ENCODE measurements at regions of chr16 and their contacts with region 1.

Region 1: GRCh38 chr16:30122604-30123160 is 338 bp downstream of the MAPK3 start:
- DNase-seq: peak in 7 of 9 experiments; percentile 14 to 58 (median 34)
- ATAC-seq: peak; percentile 29
- H3K4me3 ChIP-seq: peak overlapping the region; percentile 83 to 85
- H3K4me3 Mint-ChIP-seq: peak overlapping the region; percentile 85
- H3K27ac ChIP-seq: peak overlapping the region; percentile 34 to 55
- H3K27ac Mint-ChIP-seq: peak overlapping the region; percentile 87
- H3K4me1 ChIP-seq: peaks cover 24% of the 10 kb centered on the region
- H3K4me1 Mint-ChIP-seq: peaks cover 27% of the 10 kb centered on the region
- H3K27me3 ChIP-seq: no peaks in the 10 kb centered on the region
- H3K27me3 Mint-ChIP-seq: no peaks in the 10 kb centered on the region
- CTCF ChIP-seq: no peak

Region 2: DNA sequence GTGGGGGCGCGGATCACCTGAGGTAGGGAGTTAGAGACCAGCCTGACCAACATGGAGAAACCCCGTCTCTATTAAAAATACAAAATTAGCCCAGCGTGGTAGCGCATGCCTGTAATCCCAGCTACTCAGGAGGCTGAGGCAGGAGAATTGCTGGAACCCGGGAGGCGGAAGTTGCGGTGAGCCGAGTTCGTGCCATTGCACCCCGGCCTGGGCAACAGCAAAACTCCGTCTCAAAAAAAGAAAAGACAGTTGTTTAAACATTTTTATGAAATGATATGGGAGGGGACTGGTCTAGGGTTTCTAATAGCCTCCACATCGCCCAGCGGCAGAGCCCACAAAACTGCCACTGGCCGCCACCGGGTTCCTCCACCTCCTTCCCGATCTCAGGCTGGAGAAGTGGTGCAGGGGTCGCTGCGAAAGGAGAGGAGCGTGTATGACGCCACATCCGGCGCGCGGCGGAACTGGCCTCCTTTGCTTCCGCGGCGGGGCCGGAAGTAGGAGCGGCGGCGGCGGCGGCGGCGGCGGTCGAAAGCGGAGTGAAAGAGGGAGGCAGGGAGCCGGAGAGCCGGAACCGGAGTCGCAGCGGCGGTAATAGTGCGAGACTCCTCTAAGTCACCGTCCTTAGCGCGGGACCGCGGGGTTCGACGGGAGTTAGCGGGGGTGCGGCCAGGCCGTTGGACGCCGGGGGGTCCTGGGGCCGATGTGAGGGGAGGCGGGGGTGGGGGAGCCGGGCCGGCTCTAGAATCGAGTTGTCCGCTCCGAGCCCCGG is 47.0 kb before region 1 on chr16 and contains the start of gene PPP4C:
- CTCF ChIA-PET with region 1: interaction called, 3 read pairs
- POLR2A ChIA-PET with region 1: no interaction called
- intact Hi-C with region 1: loop called in 1 of 2 experiments (anchors 5 kb)
- DNase-seq: peak; percentile 65 to 94 (median 89)
- ATAC-seq: peak; percentile 88
- H3K4me3 ChIP-seq: peak within 1 kb of the TSS; percentile 96 to 99
- H3K4me3 Mint-ChIP-seq: peak within 1 kb of the TSS; percentile 93
- H3K27ac ChIP-seq: peak within 1 kb of the TSS; percentile 82 to 92
- H3K27ac Mint-ChIP-seq: peak within 1 kb of the TSS; percentile 96
- H3K4me1 ChIP-seq: peaks cover 31% of the 10 kb centered on the region
- H3K4me1 Mint-ChIP-seq: peaks cover 38% of the 10 kb centered on the region
- H3K27me3 ChIP-seq: no peaks in the 10 kb centered on the region
- H3K27me3 Mint-ChIP-seq: no peaks in the 10 kb centered on the region
- CTCF ChIP-seq: no peak
- total RNA-seq, gene PPP4C: 89.4 to 97.4 TPM

Region 3: DNA sequence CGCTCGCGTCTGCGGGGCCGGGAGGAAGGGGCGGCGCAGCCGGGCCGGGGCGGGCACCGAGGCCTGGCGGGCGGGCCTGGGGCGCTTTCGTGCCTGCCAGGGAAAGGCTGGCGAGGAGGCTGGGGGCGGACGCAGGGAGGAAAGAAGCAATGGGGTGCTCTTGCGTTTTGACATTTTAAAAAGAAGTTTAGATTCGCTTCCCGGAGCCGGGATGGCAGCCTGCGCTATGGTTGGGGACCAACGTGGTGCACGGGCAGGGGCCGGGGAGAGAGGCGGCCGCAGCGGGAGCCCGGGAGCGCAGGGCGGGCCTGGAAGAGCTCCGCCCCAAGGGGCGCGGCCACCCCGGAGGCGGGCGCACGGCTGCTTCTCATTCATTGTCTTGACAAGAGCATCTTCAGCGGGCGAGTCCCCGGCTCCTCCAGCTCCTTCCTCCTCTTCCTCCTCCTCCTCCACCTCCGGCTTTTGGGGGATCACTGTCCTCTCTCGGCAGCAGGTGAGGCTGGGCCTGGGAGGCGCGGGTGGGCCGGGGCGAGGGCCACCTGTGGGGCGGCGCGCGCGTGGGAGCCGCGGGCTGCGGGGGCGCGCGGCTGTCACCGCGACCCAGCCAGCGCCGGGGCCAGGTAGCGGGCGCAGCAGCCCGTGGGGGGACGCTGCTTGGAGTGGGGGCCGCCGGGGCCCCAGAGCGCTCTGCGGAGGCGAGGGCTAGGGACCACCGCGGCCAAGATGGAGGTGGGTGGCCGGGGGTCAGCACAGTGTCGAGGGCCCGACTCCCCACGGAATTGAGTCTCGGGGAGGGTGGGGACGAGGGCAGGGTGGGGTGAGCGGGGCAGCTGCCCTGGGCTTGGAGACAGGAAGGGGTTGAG is 60.8 kb after region 1 on chr16 and contains the start of gene CORO1A:
- CTCF ChIA-PET with region 1: interaction called, 5 read pairs
- POLR2A ChIA-PET with region 1: interaction called, 11 read pairs
- intact Hi-C with region 1: no loop called
- DNase-seq: peak; percentile 58 to 94 (median 84)
- ATAC-seq: peak; percentile 41
- H3K4me3 ChIP-seq: peak within 1 kb of the TSS; percentile 97 to 99
- H3K4me3 Mint-ChIP-seq: peak within 1 kb of the TSS; percentile 95
- H3K27ac ChIP-seq: peak within 1 kb of the TSS; percentile 80 to 91
- H3K27ac Mint-ChIP-seq: peak within 1 kb of the TSS; percentile 96
- H3K4me1 ChIP-seq: peaks cover 34% of the 10 kb centered on the region
- H3K4me1 Mint-ChIP-seq: peaks cover 39% of the 10 kb centered on the region
- H3K27me3 ChIP-seq: no peaks in the 10 kb centered on the region
- H3K27me3 Mint-ChIP-seq: no peaks in the 10 kb centered on the region
- CTCF ChIP-seq: no peak
- total RNA-seq, gene CORO1A: 352 to 364 TPM

Region 4: GRCh38 chr16:30417529-30418349 is 295.1 kb after region 1 on chr16:
- CTCF ChIA-PET with region 1: no interaction called
- POLR2A ChIA-PET with region 1: no interaction called
- intact Hi-C with region 1: loop called in 1 of 2 experiments (anchors 2 kb)
- DNase-seq: peak; percentile 78 to 98 (median 88)
- ATAC-seq: peak; percentile 87
- H3K4me3 ChIP-seq: peak overlapping the region; percentile 52 to 72
- H3K4me3 Mint-ChIP-seq: peak overlapping the region; percentile 74
- H3K27ac ChIP-seq: peak overlapping the region; percentile 81 to 91
- H3K27ac Mint-ChIP-seq: peak overlapping the region; percentile 77
- H3K4me1 ChIP-seq: peaks cover 18% of the 10 kb centered on the region
- H3K4me1 Mint-ChIP-seq: peaks cover 7% of the 10 kb centered on the region
- H3K27me3 ChIP-seq: no peaks in the 10 kb centered on the region
- H3K27me3 Mint-ChIP-seq: no peaks in the 10 kb centered on the region
- CTCF ChIP-seq: no peak

Region 5: DNA sequence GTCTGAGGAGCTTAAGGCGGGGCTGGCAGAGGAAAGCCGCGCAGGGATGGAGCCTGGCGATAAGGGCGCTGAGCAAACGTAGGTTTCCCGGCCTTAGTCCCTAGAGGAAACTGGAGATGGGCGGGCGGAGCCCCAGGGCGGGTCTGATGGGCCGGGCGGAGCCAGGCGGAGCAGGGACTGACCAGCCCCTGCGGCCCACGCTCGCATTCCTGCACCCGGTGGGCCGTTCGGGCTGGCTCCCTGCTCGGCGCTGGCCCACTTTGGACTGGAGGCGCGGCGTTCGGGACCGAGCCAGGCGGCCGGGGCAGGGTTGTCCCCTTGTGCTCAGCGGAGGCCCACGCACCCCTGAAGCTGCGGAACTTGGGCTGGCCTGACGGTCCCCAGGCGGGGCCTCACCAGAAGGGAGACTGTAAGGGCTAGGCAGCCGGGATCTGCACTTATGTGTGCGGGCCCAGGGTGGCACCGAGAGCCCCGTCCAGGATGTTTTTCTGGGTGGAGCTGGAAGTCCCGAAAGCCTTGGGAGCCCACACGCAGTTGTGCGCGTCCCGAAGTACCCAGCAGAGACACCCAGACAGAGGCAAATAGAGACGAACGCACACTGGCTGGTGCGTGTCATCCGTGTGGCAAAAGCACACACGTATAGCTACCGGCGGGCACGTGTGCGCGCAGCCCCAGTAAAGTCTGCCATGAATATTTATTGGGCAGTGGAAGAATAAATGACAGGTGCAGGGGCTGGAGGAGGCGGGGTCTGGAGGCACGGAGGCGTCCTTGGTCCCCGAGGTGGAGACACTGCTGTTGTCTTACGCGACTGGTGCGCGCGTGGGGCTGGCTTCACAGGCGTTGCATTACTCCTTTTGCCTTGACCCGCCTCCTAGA is 1092.8 kb after region 1 on chr16:
- CTCF ChIA-PET with region 1: no interaction called
- POLR2A ChIA-PET with region 1: no interaction called
- intact Hi-C with region 1: no loop called
- DNase-seq: peak in 4 of 9 experiments; percentile 29 to 55 (median 46)
- ATAC-seq: peak; percentile 70
- H3K4me3 ChIP-seq: peak overlapping the region; percentile 24 to 34
- H3K4me3 Mint-ChIP-seq: peak overlapping the region; percentile 80
- H3K27ac ChIP-seq: no peak overlapping the region
- H3K27ac Mint-ChIP-seq: no peak overlapping the region
- H3K4me1 ChIP-seq: peaks cover 27% of the 10 kb centered on the region
- H3K4me1 Mint-ChIP-seq: peaks cover 13% of the 10 kb centered on the region
- H3K27me3 ChIP-seq: peaks cover 24 to 33% of the 10 kb centered on the region in 2 experiments
- H3K27me3 Mint-ChIP-seq: peaks cover 28% of the 10 kb centered on the region
- CTCF ChIP-seq: no peak